ENCODE measurements at regions of chr4 and their contacts with region 1.

Region 1: GRCh38 chr4:118270492-118270891 is 82.3 kb downstream of the PRSS12 start:
- DNase-seq: peak in 1 of 2 experiments; percentile 71
- H3K4me3 ChIP-seq: no peak overlapping the region
- H3K4me1 ChIP-seq: no peaks in the 10 kb centered on the region
- H3K27me3 ChIP-seq: no peaks in the 10 kb centered on the region

Region 2: GRCh38 chr4:118076958-118077766 is 193.3 kb before region 1 on chr4:
- in situ Hi-C with region 1: loop called (anchors 25 kb)
- DNase-seq: peak; percentile 50 to 73
- H3K4me3 ChIP-seq: no peak overlapping the region
- H3K4me1 ChIP-seq: no peaks in the 10 kb centered on the region
- H3K27me3 ChIP-seq: no peaks in the 10 kb centered on the region